IMR-90 (cell line): ENCODE measurements at regions of chrX and their contacts with region 1.

Region 1: GRCh38 chrX:109856974-109857373 is 123.9 kb upstream of the ACSL4 start:
- DNase-seq: peak; percentile 34
- ATAC-seq: no peak
- H3K4me3 ChIP-seq: no peak overlapping the region
- H3K27ac ChIP-seq: peak overlapping the region; percentile 70; the same call in 1 of the 2 replicates
- H3K4me1 ChIP-seq: no peaks in the 10 kb centered on the region
- H3K27me3 ChIP-seq: 0 out of 2 replicates have a peak, but pooled peaks cover 2% of the 10 kb centered on the region
- CTCF ChIP-seq: peak; percentile 68
- POLR2A ChIP-seq: no peak
- RAD21 ChIP-seq: peak; percentile 69

Region 2: DNA sequence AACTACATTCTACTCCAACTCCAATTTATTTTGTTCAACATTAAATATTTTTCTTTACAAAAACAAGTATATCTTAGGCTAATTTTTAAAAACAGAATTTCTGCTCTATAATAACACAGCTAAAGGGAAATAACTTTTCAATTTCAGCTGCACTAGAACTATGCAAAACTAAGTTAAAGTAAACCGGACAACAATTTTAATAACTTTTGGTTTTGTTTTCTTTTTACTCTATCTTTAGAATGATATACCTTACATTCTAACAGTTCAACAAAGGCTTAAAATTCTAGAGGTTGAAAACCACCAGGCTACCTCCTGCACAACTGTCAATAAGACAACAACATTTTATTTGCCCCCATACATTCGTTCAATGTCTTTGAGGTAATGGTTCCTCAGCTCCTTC is 213.3 kb before region 1 on chrX:
- CTCF ChIA-PET with region 1: no interaction called
- POLR2A ChIA-PET with region 1: no interaction called
- dilution Hi-C with region 1: no loop called
- in situ Hi-C with region 1: no loop called
- intact Hi-C with region 1: no loop called
- DNase-seq: no peak
- ATAC-seq: no peak
- H3K4me3 ChIP-seq: no peak overlapping the region
- H3K27ac ChIP-seq: no peak overlapping the region
- H3K4me1 ChIP-seq: no peaks in the 10 kb centered on the region
- H3K27me3 ChIP-seq: no peaks in the 10 kb centered on the region; the same call in 1 of the 2 replicates
- CTCF ChIP-seq: no peak
- POLR2A ChIP-seq: no peak
- RAD21 ChIP-seq: no peak

Region 3: DNA sequence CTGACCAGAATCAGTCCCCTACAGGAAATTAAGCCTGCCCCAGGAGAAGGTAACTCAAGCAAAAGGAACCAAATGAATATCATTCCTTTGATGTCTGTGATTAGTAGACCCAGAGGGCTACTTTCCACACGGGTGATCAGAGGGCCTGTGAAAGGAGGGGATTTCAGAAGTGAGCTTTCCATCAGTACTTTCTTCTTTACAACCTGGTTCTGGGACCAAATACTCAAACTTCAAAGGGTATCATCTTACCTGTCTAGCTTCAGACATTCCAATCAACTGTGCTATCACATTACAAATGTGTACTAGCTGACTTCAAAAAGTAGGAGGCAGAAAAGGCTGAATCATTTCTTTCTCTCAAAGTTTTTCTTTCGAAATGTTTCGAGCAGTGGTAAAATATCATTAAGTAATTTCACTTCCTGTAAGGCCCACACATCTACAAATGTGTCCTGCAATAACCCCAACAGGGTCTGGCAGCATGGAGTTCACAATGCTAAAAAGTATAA is 147.8 kb before region 1 on chrX:
- CTCF ChIA-PET with region 1: interaction called, 23 read pairs
- POLR2A ChIA-PET with region 1: interaction called, 6 read pairs
- dilution Hi-C with region 1: no loop called
- in situ Hi-C with region 1: no loop called
- intact Hi-C with region 1: loop called (anchors 1 kb)
- DNase-seq: peak; percentile 65
- ATAC-seq: peak; percentile 55
- H3K4me3 ChIP-seq: no peak overlapping the region
- H3K27ac ChIP-seq: peak overlapping the region; percentile 48; the same call in 1 of the 2 replicates
- H3K4me1 ChIP-seq: peaks cover 4% of the 10 kb centered on the region
- H3K27me3 ChIP-seq: no peaks in the 10 kb centered on the region; the same call in 1 of the 2 replicates
- CTCF ChIP-seq: peak; percentile 11; the same call in 1 of the 2 replicates
- POLR2A ChIP-seq: no peak
- RAD21 ChIP-seq: no peak

Region 4: DNA sequence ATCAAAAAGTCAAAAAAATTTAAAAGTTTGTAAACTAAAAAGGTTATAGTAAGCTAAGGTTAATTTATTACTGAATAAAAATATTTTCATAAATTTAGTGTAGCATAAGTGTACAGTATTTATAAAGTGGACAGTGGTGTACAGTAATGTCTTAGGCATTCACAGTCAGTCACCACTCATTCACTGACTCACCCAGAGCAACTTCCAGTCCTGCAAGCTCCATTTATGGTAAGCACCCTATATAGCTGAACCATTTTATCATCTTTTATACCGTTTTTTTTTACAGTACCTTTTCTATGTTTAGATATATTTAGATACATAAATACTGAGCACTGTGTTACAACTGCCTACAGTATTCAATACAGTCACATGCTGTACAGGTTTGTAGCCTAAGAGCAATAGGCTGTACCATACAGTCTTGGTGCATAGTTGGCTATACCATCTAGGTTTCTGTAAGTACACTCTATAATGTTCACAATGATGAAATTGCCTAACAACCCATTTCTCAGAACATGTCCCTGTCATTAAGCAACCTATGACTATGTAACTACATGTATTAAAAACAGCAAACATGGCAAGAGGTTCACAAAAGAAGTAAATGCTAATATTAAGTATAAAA is 142.5 kb before region 1 on chrX:
- CTCF ChIA-PET with region 1: interaction called, 23 read pairs
- POLR2A ChIA-PET with region 1: interaction called, 6 read pairs
- dilution Hi-C with region 1: no loop called
- in situ Hi-C with region 1: no loop called
- intact Hi-C with region 1: loop called (anchors 1 kb)
- DNase-seq: peak; percentile 91
- ATAC-seq: peak; percentile 80
- H3K4me3 ChIP-seq: no peak overlapping the region
- H3K27ac ChIP-seq: peak overlapping the region; percentile 96
- H3K4me1 ChIP-seq: peaks cover 2% of the 10 kb centered on the region
- H3K27me3 ChIP-seq: no peaks in the 10 kb centered on the region
- CTCF ChIP-seq: no peak
- POLR2A ChIP-seq: no peak
- RAD21 ChIP-seq: no peak